ENCODE measurements at regions of chr11 and their contacts with region 1.

Region 1: GRCh38 chr11:65329944-65330403 is 3.7 kb upstream of the DPF2 start:
- DNase-seq: peak; percentile 98
- ATAC-seq: peak; percentile 46
- H3K4me3 ChIP-seq: peak overlapping the region; percentile 15; the same call in 1 of the 2 replicates
- H3K27ac ChIP-seq: no peak overlapping the region
- H3K4me1 ChIP-seq: peaks cover 11% of the 10 kb centered on the region
- H3K27me3 ChIP-seq: no peaks in the 10 kb centered on the region
- CTCF ChIP-seq: peak; percentile 91

Region 2: DNA sequence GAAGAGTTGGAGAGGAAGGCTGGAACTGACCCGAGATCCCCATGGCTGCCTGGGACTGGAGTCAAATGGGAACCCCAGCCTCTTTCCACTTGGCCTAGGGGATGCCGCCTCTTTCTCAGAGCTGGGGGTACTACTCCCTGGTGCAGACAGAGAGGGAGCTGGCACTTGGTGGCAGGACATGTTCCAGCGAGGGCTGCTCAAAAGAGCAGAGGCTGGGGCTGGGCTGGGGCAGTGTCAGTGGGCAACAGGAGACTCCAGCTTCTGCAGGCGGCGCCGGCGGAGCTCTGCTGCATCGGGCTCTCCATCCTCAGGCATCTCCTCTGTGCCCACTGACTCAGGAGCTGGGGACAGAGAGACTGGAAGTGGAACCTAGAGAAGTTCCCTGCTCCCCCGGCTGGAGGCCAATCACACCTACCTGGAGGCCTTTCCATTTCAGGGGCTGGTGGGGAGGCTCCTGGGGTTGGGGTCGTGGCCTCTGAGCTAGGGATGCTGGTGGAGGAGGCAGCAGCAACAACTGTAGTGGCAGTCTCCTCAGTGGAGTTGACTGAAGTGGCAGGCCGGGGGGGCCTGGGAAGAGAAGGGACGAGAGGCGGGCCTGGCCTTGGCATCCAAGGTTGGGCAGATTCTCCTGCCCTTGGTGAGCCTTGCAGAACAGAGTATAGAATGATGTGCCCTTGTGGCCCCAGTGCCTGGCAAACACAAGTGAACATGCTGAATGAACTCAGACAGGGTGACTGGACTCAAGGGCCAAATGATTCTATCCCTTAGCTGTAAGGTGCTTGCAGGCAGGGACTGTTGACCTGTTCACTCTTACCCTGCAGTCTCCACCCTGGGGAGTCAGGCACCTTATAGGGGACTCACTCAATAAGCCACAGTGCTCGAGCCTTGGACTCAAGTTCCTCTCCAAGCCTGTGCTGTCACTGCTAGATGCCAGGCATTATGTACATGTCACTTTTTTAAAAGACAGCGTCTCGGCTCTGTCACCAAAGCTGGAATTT is 201.5 kb before region 1 on chr11:
- CTCF ChIA-PET with region 1: no interaction called
- POLR2A ChIA-PET with region 1: interaction called, 18 read pairs
- intact Hi-C with region 1: no loop called
- DNase-seq: no peak
- ATAC-seq: no peak
- H3K4me3 ChIP-seq: no peak overlapping the region
- H3K27ac ChIP-seq: no peak overlapping the region
- H3K4me1 ChIP-seq: peaks cover 15% of the 10 kb centered on the region
- H3K27me3 ChIP-seq: no peaks in the 10 kb centered on the region
- CTCF ChIP-seq: no peak

Region 3: GRCh38 chr11:65314501-65315203 is 15.3 kb before region 1 on chr11 and contains the start of gene CDC42EP2:
- CTCF ChIA-PET with region 1: interaction called, 31 read pairs
- POLR2A ChIA-PET with region 1: interaction called, 8 read pairs
- intact Hi-C with region 1: loop called (anchors 1 kb)
- DNase-seq: peak; percentile 94
- ATAC-seq: peak; percentile 67
- H3K4me3 ChIP-seq: peak within 1 kb of the TSS; percentile 72
- H3K27ac ChIP-seq: peak within 1 kb of the TSS; percentile 87
- H3K4me1 ChIP-seq: peaks cover 36% of the 10 kb centered on the region
- H3K27me3 ChIP-seq: no peaks in the 10 kb centered on the region
- CTCF ChIP-seq: no peak
- total RNA-seq, gene CDC42EP2: 16.6 and 25.7 TPM in 2 replicates

Region 4: DNA sequence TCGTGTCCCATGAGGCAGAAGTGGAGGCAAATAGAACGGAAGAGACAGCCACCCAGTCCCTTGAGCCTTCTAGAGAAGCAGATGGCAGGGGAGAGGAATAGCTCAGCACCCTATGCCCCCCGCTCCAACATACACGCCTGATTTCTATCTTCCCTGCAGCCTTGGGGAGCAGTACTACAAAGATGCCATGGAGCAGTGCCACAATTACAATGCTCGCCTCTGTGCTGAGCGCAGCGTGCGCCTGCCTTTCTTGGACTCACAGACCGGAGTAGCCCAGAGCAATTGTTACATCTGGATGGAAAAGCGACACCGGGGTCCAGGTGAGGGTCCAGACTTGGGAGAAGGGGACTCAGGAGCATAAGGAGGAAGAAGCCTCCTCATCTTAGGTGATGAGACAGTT is 10.3 kb after region 1 on chr11:
- CTCF ChIA-PET with region 1: no interaction called
- POLR2A ChIA-PET with region 1: interaction called, 12 read pairs
- intact Hi-C with region 1: no loop called
- DNase-seq: no peak
- ATAC-seq: no peak
- H3K4me3 ChIP-seq: no peak overlapping the region
- H3K27ac ChIP-seq: no peak overlapping the region
- H3K4me1 ChIP-seq: peaks cover 4% of the 10 kb centered on the region
- H3K27me3 ChIP-seq: no peaks in the 10 kb centered on the region
- CTCF ChIP-seq: no peak

Region 5: GRCh38 chr11:65646921-65647751 is 317.2 kb after region 1 on chr11:
- CTCF ChIA-PET with region 1: no interaction called
- POLR2A ChIA-PET with region 1: interaction called, 13 read pairs
- intact Hi-C with region 1: no loop called
- DNase-seq: peak; percentile 71
- ATAC-seq: peak; percentile 69
- H3K4me3 ChIP-seq: peak overlapping the region; percentile 76
- H3K27ac ChIP-seq: no peak overlapping the region
- H3K4me1 ChIP-seq: peaks cover 12% of the 10 kb centered on the region
- H3K27me3 ChIP-seq: no peaks in the 10 kb centered on the region
- CTCF ChIP-seq: no peak